ENCODE measurements at regions of chr2 and their contacts with region 1.

Region 1: DNA sequence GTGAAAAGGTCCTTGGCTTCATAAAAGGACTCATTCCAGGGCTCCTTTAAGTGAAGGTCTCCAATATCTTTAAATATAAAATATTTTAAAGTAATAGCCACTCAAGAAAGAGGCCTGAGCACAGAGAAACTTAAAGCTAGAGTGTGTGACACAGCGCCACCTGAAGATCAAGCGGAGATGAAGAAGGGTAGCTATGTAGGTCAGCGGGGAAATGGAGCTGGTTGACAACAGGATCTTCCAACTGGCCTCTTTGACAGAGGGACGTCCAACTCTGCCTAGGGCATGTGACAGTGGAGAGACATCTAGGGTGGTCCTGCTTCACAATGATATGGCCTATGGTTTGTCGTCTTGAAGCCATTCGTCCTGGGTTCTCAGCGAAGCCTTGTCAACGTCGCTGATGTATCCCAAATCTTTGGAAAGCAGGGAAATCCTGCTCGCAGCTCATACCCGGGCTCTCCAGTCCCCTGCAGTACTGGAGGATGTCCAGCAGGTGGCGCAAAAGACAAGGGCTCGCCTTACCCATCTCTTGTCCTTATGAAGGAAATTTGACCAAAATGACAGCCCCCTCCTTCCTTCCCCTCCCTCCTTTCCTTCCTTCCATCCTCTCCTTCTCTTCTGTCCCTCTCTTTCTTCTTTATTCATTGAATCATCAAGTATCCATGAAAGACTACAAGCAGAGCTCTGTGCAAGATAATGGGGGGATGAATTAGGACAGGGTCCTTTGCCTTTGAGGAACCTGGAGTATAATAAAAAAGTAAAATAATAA is 59.6 kb downstream of the LONRF2 start:
- DNase-seq: peak; percentile 73
- ATAC-seq: peak; percentile 70
- H3K4me3 Mint-ChIP-seq: no peak overlapping the region
- H3K27ac Mint-ChIP-seq: no peak overlapping the region
- H3K4me1 Mint-ChIP-seq: no peaks in the 10 kb centered on the region
- H3K27me3 Mint-ChIP-seq: no peaks in the 10 kb centered on the region
- CTCF ChIP-seq: peak; percentile 97

Region 2: GRCh38 chr2:99559075-99559662 is 703.6 kb before region 1 on chr2:
- CTCF ChIA-PET with region 1: interaction called, 34 read pairs
- POLR2A ChIA-PET with region 1: no interaction called
- intact Hi-C with region 1: no loop called
- DNase-seq: peak; percentile 92
- ATAC-seq: peak; percentile 97
- H3K4me3 Mint-ChIP-seq: no peak overlapping the region
- H3K27ac Mint-ChIP-seq: no peak overlapping the region
- H3K4me1 Mint-ChIP-seq: peaks cover 2% of the 10 kb centered on the region
- H3K27me3 Mint-ChIP-seq: no peaks in the 10 kb centered on the region
- CTCF ChIP-seq: peak; percentile 99

Region 3: GRCh38 chr2:99786636-99787390 is 475.9 kb before region 1 on chr2:
- CTCF ChIA-PET with region 1: no interaction called
- POLR2A ChIA-PET with region 1: no interaction called
- intact Hi-C with region 1: no loop called
- DNase-seq: no peak
- ATAC-seq: no peak
- H3K4me3 Mint-ChIP-seq: no peak overlapping the region
- H3K27ac Mint-ChIP-seq: no peak overlapping the region
- H3K4me1 Mint-ChIP-seq: no peaks in the 10 kb centered on the region
- H3K27me3 Mint-ChIP-seq: no peaks in the 10 kb centered on the region
- CTCF ChIP-seq: no peak

Region 4: GRCh38 chr2:100274076-100274475 is 11.3 kb after region 1 on chr2:
- CTCF ChIA-PET with region 1: interaction called, 32 read pairs
- POLR2A ChIA-PET with region 1: no interaction called
- intact Hi-C with region 1: no loop called
- DNase-seq: peak; percentile 15
- ATAC-seq: peak; percentile 60
- H3K4me3 Mint-ChIP-seq: no peak overlapping the region
- H3K27ac Mint-ChIP-seq: no peak overlapping the region
- H3K4me1 Mint-ChIP-seq: peaks cover 6% of the 10 kb centered on the region
- H3K27me3 Mint-ChIP-seq: no peaks in the 10 kb centered on the region
- CTCF ChIP-seq: no peak

Region 5: GRCh38 chr2:100291120-100291970 is 28.6 kb after region 1 on chr2:
- CTCF ChIA-PET with region 1: interaction called, 20 read pairs
- POLR2A ChIA-PET with region 1: interaction called, 3 read pairs
- intact Hi-C with region 1: no loop called
- DNase-seq: peak; percentile 81
- ATAC-seq: peak; percentile 93
- H3K4me3 Mint-ChIP-seq: no peak overlapping the region
- H3K27ac Mint-ChIP-seq: no peak overlapping the region
- H3K4me1 Mint-ChIP-seq: no peaks in the 10 kb centered on the region
- H3K27me3 Mint-ChIP-seq: peaks cover 5% of the 10 kb centered on the region
- CTCF ChIP-seq: no peak

Region 6: DNA sequence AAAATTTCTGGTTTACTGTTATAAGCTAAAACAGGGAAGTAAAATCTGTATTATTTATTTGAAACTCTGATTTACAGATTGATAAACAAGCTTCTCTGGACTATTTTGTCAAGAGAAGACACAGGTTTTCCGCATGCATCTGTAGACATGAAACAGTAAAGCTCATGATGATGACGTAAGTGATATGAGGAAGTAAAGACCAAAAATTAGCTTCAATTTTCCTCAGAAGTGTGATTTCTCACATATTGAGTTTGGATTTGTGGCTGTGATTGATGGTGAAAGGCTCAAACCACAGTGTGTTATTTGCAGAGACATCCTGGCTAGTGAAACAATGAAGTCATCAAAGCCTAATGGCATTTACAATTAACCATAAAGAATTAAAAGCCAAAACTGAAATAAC is 72.2 kb after region 1 on chr2:
- CTCF ChIA-PET with region 1: no interaction called
- POLR2A ChIA-PET with region 1: no interaction called
- intact Hi-C with region 1: no loop called
- DNase-seq: no peak
- ATAC-seq: no peak
- H3K4me3 Mint-ChIP-seq: no peak overlapping the region
- H3K27ac Mint-ChIP-seq: no peak overlapping the region
- H3K4me1 Mint-ChIP-seq: no peaks in the 10 kb centered on the region
- H3K27me3 Mint-ChIP-seq: peaks cover 16% of the 10 kb centered on the region
- CTCF ChIP-seq: no peak

Region 7: GRCh38 chr2:100391735-100392515 is 129.2 kb after region 1 on chr2:
- CTCF ChIA-PET with region 1: interaction called, 11 read pairs
- POLR2A ChIA-PET with region 1: no interaction called
- intact Hi-C with region 1: no loop called
- DNase-seq: no peak
- ATAC-seq: no peak
- H3K4me3 Mint-ChIP-seq: no peak overlapping the region
- H3K27ac Mint-ChIP-seq: no peak overlapping the region
- H3K4me1 Mint-ChIP-seq: no peaks in the 10 kb centered on the region
- H3K27me3 Mint-ChIP-seq: no peaks in the 10 kb centered on the region
- CTCF ChIP-seq: no peak